MCF 10A (cell line): ENCODE measurements at regions of chr14 and their contacts with region 1.

Region 1: GRCh38 chr14:70027785-70028428 is 148.7 kb downstream of the SMOC1 start:
- DNase-seq: peak; percentile 64
- H3K4me3 Mint-ChIP-seq: no peak overlapping the region
- H3K27ac Mint-ChIP-seq: no peak overlapping the region
- H3K4me1 Mint-ChIP-seq: peaks cover 8% of the 10 kb centered on the region
- H3K27me3 Mint-ChIP-seq: no peaks in the 10 kb centered on the region
- CTCF ChIP-seq: peak; percentile 95

Region 2: DNA sequence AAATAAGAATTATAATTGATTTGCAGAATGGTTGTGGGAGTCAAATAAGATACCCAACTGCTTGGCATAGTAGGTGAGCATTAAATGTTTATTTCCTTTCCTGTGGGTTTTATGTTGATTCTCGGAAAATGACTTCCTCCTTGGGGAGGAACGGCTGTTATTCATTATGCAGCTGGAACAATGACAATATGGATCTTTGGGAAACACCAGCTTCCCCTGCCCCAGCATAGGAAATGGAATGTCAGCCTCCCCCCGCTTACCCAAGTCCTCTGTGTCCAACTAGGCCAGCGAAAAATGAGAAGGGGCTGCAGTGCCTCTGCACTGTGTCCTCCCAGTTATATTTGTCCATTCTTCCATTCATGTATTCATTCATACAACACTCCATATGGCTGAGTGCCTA is 441.5 kb before region 1 on chr14:
- CTCF ChIA-PET with region 1: interaction called, 7 read pairs
- POLR2A ChIA-PET with region 1: no interaction called
- intact Hi-C with region 1: loop called (anchors 5 kb)
- DNase-seq: no peak
- H3K4me3 Mint-ChIP-seq: no peak overlapping the region
- H3K27ac Mint-ChIP-seq: no peak overlapping the region
- H3K4me1 Mint-ChIP-seq: peaks cover 13% of the 10 kb centered on the region
- H3K27me3 Mint-ChIP-seq: no peaks in the 10 kb centered on the region
- CTCF ChIP-seq: no peak

Region 3: GRCh38 chr14:69808919-69809808 is 218.7 kb before region 1 on chr14:
- CTCF ChIA-PET with region 1: interaction called, 77 read pairs
- POLR2A ChIA-PET with region 1: no interaction called
- intact Hi-C with region 1: no loop called
- DNase-seq: no peak
- H3K4me3 Mint-ChIP-seq: no peak overlapping the region
- H3K27ac Mint-ChIP-seq: no peak overlapping the region
- H3K4me1 Mint-ChIP-seq: no peaks in the 10 kb centered on the region
- H3K27me3 Mint-ChIP-seq: no peaks in the 10 kb centered on the region
- CTCF ChIP-seq: no peak

Region 4: GRCh38 chr14:69863083-69863482 is 164.8 kb before region 1 on chr14:
- CTCF ChIA-PET with region 1: interaction called, 10 read pairs
- POLR2A ChIA-PET with region 1: no interaction called
- intact Hi-C with region 1: no loop called
- DNase-seq: peak; percentile 21
- H3K4me3 Mint-ChIP-seq: no peak overlapping the region
- H3K27ac Mint-ChIP-seq: no peak overlapping the region
- H3K4me1 Mint-ChIP-seq: no peaks in the 10 kb centered on the region
- H3K27me3 Mint-ChIP-seq: peaks cover 10% of the 10 kb centered on the region
- CTCF ChIP-seq: peak; percentile 7

Region 5: GRCh38 chr14:69879175-69880043 is 148.5 kb before region 1 on chr14 and contains the start of gene SMOC1:
- CTCF ChIA-PET with region 1: interaction called, 36 read pairs
- POLR2A ChIA-PET with region 1: interaction called, 3 read pairs
- intact Hi-C with region 1: loop called (anchors 1 kb)
- DNase-seq: peak; percentile 88
- H3K4me3 Mint-ChIP-seq: peak within 1 kb of the TSS; percentile 87
- H3K27ac Mint-ChIP-seq: peak within 1 kb of the TSS; percentile 61
- H3K4me1 Mint-ChIP-seq: peaks cover 40% of the 10 kb centered on the region
- H3K27me3 Mint-ChIP-seq: no peaks in the 10 kb centered on the region
- CTCF ChIP-seq: no peak
- total RNA-seq, gene SMOC1: 22.9 and 23.6 TPM in 2 replicates

Region 6: GRCh38 chr14:69910871-69911270 is 117.0 kb before region 1 on chr14:
- CTCF ChIA-PET with region 1: no interaction called
- POLR2A ChIA-PET with region 1: no interaction called
- intact Hi-C with region 1: no loop called
- DNase-seq: no peak
- H3K4me3 Mint-ChIP-seq: no peak overlapping the region
- H3K27ac Mint-ChIP-seq: no peak overlapping the region
- H3K4me1 Mint-ChIP-seq: peaks cover 9% of the 10 kb centered on the region
- H3K27me3 Mint-ChIP-seq: no peaks in the 10 kb centered on the region
- CTCF ChIP-seq: no peak

Region 7: GRCh38 chr14:69963966-69964365 is 63.9 kb before region 1 on chr14:
- CTCF ChIA-PET with region 1: interaction called, 10 read pairs
- POLR2A ChIA-PET with region 1: no interaction called
- intact Hi-C with region 1: no loop called
- DNase-seq: no peak
- H3K4me3 Mint-ChIP-seq: no peak overlapping the region
- H3K27ac Mint-ChIP-seq: no peak overlapping the region
- H3K4me1 Mint-ChIP-seq: no peaks in the 10 kb centered on the region
- H3K27me3 Mint-ChIP-seq: no peaks in the 10 kb centered on the region
- CTCF ChIP-seq: no peak

Region 8: GRCh38 chr14:70045844-70046535 is 18.1 kb after region 1 on chr14:
- CTCF ChIA-PET with region 1: interaction called, 11 read pairs
- POLR2A ChIA-PET with region 1: interaction called, 3 read pairs
- intact Hi-C with region 1: no loop called
- DNase-seq: peak; percentile 68
- H3K4me3 Mint-ChIP-seq: no peak overlapping the region
- H3K27ac Mint-ChIP-seq: no peak overlapping the region
- H3K4me1 Mint-ChIP-seq: peaks cover 13% of the 10 kb centered on the region
- H3K27me3 Mint-ChIP-seq: peaks cover 13% of the 10 kb centered on the region
- CTCF ChIP-seq: peak; percentile 88